Right lobe of liver (tissue), 6 donors: ENCODE measurements at regions of chr1 and their contacts with region 1.

Region 1: DNA sequence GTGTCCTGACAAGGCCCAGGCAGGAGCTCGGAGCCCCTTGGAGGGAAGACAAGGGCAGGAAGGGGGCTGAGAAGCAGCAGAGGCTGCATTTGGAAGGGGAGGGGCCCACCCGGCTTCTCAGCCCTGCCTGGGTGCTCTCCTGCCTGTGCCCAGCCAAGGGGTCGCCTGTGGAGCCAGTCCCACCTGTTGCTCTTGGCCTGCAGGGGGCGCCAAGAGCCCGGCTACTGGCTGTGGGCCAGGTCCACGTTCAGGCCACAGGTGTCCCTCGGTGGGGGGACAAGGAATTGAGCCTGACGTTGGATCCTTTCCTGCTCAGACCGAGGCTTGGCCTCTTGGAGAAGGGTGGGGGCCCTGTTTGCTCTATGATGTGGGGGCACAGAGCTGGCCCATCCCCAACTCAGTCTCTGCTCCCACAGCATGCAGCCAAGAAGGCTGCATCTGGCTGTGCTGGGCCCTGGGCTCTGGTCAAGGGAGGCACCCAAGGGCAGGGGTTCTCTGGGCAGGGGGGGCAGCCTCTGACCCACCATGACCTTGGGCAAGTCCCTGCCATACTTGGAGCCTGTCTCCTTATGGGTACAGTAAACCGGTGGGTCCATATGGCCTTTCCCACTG is 10.9 kb downstream of the WNT4 start:
- DNase-seq: peak in 1 of 3 donors; percentile 48
- ATAC-seq: peak; percentile 41 to 66 (median 61)
- H3K4me3 ChIP-seq: no peak overlapping the region
- H3K27ac ChIP-seq: no peak overlapping the region
- H3K4me1 ChIP-seq: no peaks in the 10 kb centered on the region
- H3K27me3 ChIP-seq: peaks cover 0 to 7% of the 10 kb centered on the region in 2 donors
- CTCF ChIP-seq: peak; percentile 73 to 83 (median 80)
- POLR2A ChIP-seq: no peak

Region 2: DNA sequence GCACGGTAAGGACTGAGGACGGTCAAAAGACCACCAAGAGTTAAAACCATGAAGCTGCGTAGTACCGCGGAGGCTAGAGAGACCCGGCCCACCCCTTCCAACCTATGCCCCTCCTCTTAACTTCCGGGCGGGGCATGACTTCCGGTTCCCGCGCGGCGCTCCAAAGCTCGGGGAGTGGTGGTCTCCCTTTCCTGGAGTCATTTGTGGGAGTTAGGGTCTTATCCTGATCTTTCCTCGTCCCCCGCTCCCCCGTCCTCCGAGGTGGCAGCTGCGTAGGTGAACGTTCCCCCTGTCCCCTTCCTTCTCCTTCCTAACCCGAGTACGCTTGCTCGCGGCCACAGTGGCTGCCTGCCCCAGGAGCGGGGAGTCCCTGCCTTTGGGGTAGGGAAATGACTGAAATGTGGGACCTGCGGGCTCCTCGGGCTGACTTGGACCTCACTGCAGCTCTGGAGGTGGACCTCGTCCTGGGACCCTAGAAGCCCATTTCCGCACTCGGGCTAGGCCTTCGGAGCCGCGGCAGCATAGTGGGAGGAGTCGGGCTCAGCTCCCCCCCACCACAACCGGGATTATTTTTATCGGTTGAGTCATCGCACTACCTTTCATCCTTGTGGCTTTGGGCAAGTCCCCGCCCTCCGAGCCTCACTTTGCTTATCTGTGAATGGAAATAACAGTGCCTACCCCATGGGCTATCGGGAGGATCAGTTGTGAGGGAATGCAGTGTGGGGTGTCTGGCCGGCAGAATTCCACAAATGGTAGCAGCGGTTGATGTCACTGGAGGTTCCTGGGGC is 106.4 kb before region 1 on chr1:
- intact Hi-C with region 1: no loop called
- DNase-seq: peak; percentile 78 to 89 (median 82)
- ATAC-seq: peak; percentile 88 to 95 (median 91)
- H3K4me3 ChIP-seq: peak overlapping the region; percentile 68 to 98 (median 88)
- H3K27ac ChIP-seq: peak overlapping the region; percentile 93 to 98 (median 95)
- H3K4me1 ChIP-seq: peaks cover 0 to 15% (median 0%) of the 10 kb centered on the region in 4 donors
- H3K27me3 ChIP-seq: no peaks in the 10 kb centered on the region
- CTCF ChIP-seq: no peak
- POLR2A ChIP-seq: peak; percentile 84

Region 3: DNA sequence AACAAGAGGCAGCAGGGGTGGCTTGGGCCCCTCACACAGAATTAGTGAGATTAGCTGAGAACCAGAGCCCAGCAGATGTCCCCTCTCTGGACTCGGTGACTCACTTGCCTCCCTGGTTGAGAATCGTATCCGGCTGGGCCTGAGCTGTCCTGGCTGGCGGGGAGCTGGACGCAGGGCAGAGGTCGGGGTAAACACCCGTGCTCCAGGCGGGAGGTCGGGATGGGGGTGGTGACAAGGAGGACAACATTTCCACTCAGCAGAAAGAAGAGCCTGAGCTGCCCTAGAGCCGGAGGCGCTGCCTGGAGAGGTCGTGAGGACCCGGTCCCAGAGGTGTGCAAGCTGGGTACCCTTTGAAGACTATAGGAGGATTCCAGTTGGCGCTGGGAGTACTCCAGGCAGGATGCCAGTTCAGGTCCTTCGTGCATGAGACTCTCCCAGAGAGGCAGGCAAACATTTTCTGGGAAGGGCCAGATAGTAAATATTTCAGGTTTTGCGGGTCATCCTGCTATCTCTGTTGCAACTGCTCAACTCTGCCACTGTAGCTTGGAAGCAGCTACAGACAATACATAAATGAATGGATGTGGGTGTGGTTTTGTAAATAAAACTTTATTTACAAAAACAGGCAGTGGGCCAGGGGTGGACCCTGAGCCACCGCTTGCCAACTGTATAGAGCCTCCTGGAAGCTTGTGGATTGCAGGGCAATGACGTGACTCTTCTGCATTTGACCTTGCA is 127.7 kb after region 1 on chr1:
- intact Hi-C with region 1: loop called in 1 of 2 experiments (anchors 10 kb)
- DNase-seq: peak; percentile 75 to 87 (median 86)
- ATAC-seq: peak; percentile 76 to 88 (median 80)
- H3K4me3 ChIP-seq: no peak overlapping the region
- H3K27ac ChIP-seq: no peak overlapping the region
- H3K4me1 ChIP-seq: peaks cover 0 to 25% (median 10%) of the 10 kb centered on the region in 4 donors
- H3K27me3 ChIP-seq: peaks cover 0 to 27% of the 10 kb centered on the region in 2 donors
- CTCF ChIP-seq: no peak
- POLR2A ChIP-seq: no peak

Region 4: DNA sequence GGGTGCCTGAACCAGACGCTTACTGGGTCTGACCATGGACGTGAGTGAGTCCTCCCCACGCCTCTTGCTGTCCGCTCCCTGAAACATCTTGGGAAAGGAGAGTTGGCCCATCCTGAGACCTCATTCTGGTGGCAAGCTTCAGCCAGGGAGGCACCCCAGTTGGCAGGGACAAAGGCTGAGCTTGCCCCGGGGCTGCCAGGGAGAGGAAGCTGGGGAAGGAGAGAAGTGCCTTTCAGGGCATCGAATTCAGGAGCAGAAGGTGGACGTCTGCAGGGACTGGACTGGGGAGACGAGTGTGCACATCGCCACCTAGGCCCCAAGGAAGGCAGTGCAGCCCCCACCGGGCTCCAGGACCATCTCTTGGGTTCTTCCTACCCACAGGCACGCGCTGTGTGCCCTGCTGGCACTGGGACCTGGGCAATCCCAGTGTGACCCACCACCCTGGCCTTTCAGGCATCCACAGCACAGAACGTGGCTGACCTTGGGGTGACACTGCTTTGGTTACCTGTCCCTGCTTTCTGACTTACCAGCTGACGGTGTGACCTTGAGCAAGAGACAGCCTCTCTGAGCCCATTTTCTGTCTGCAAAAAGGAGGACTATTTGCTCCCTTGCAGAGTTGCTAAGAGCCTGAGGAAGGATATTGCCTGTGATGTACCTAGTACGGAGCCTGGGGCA is 143.9 kb after region 1 on chr1:
- intact Hi-C with region 1: loop called in 1 of 2 experiments (anchors 10 kb)
- DNase-seq: peak in 1 of 3 donors; percentile 51
- ATAC-seq: peak; percentile 85 to 95 (median 90)
- H3K4me3 ChIP-seq: no peak overlapping the region
- H3K27ac ChIP-seq: no peak overlapping the region
- H3K4me1 ChIP-seq: no peaks in the 10 kb centered on the region
- H3K27me3 ChIP-seq: peaks cover 0 to 9% of the 10 kb centered on the region in 2 donors
- CTCF ChIP-seq: peak; percentile 58 to 80 (median 76)
- POLR2A ChIP-seq: no peak

Region 5: DNA sequence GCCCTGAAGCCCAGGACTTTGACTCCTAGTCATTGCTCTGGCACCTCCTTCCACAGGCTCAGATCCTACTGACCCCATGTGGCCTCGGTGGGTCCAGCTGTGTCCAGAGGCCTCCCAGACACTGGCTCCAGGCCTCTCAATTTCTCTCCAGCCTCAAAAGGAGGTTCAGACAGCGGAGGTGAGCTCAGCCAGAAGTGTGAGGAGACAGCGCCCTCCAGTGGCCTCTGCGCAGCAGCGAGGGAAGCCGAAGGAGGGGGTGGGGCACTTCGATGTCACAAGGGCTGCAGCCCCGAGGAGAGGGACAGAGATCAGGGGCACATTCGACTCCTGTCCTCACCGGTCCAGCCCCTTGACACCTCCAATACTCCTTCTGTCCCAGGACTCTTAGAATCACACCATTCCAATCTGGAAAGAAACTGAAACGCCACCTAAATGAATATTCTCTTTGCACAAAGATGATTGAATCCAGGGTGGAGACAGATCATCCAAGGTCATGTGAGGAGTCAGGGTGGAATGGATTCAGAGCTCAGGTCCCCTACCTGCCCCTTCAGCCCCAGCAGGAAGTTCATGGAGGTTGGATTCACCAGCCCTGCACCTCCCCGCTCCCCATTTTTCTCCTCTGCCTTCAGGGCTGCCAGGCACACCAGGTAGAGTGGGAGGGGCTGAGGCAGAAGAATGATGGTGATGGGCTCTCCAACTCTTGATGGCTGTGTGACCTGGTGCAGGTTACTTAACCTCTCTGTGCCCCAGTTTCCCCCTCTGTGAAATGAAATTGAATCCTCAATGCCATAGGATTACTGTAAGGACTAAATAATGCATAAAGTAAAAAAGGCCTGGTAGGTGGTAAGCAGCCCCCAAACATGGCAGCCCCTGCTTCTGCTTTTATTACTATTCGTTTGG is 284.8 kb after region 1 on chr1:
- intact Hi-C with region 1: loop called (anchors 5 to 10 kb)
- DNase-seq: peak; percentile 78 to 82 (median 81)
- ATAC-seq: peak; percentile 51 to 75 (median 66)
- H3K4me3 ChIP-seq: no peak overlapping the region
- H3K27ac ChIP-seq: no peak overlapping the region
- H3K4me1 ChIP-seq: peaks cover 0 to 19% (median 7%) of the 10 kb centered on the region in 4 donors
- H3K27me3 ChIP-seq: no peaks in the 10 kb centered on the region
- CTCF ChIP-seq: peak; percentile 90 to 98 (median 96)
- POLR2A ChIP-seq: no peak

Region 6: GRCh38 chr1:22641906-22642636 is 510.1 kb after region 1 on chr1:
- intact Hi-C with region 1: loop called in 1 of 2 experiments (anchors 10 kb)
- DNase-seq: peak; percentile 84 to 87 (median 85)
- ATAC-seq: peak; percentile 85 to 91 (median 86)
- H3K4me3 ChIP-seq: no peak overlapping the region
- H3K27ac ChIP-seq: no peak overlapping the region
- H3K4me1 ChIP-seq: no peaks in the 10 kb centered on the region
- H3K27me3 ChIP-seq: no peaks in the 10 kb centered on the region
- CTCF ChIP-seq: peak; percentile 87 to 97 (median 95)
- POLR2A ChIP-seq: no peak